ENCODE measurements at regions of chr1 and their contacts with region 1.

Region 1: DNA sequence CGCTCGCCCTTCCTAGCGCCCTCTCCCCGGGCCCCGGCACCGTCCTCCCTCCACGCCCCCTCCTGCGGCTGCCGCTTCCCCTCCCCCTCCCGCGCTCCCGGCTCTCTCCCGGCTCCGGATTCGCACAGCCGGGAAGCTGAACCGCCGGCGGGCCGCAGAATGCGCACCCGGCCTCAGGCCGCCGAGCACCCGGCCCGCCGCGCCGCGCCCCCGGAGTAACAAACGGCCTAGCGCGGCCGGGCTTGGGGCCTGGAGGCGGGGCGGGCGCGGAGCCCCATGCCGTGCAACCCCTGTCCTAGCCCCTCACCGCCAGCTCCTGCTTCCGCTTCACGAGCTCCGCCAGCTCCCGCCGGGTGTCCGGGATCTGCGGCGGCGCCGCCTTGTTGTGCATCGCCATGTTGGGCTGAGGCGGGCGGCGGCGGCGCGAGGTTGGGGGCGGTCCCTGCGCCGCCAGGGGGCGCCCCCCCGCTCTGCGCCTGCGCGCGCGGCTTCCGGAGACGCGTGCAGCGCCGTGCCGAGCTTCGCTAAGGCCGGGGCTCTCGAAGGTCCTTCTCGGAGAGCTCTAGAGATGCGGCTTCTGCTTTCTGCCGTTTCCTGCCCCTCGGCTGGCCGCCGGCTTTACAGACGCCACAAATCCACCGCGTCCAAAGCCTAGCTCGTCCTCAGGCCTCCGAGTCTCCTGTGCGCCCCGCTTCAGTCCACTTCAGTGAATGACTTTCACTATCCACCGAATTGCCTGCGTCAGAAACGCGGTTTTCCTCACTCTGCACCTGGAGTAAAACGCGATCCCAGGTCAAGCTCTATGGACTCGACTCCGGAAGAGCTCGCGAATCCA is at the start of gene MEAF6:
- DNase-seq: no peak
- ATAC-seq: peak; percentile 98
- H3K4me3 ChIP-seq: peak within 1 kb of the TSS; percentile 82
- H3K27ac ChIP-seq: peak within 1 kb of the TSS; percentile 39
- H3K4me1 ChIP-seq: peaks cover 6% of the 10 kb centered on the region
- H3K27me3 ChIP-seq: no peaks in the 10 kb centered on the region
- CTCF ChIP-seq: peak; percentile 36 to 74 (median 55); a peak in 5 of 6 replicates
- EP300 ChIP-seq: no peak
- POLR2A ChIP-seq: peak; percentile 84
- RAD21 ChIP-seq: no peak
- polyA plus RNA-seq, gene MEAF6: 30.8 to 33.3 TPM

Region 2: GRCh38 chr1:37479255-37480124 is 35.1 kb before region 1 on chr1:
- CTCF ChIA-PET with region 1: interaction called, 7 read pairs
- POLR2A ChIA-PET with region 1: interaction called, 28 read pairs
- RAD21 ChIA-PET with region 1: interaction called, 13 read pairs
- SMC1A ChIA-PET with region 1: interaction called, 6 read pairs
- in situ Hi-C with region 1: no loop called
- intact Hi-C with region 1: loop called (anchors 2 kb)
- DNase-seq: peak; percentile 65
- ATAC-seq: peak; percentile 53
- H3K4me3 ChIP-seq: peak overlapping the region; percentile 99
- H3K27ac ChIP-seq: peak overlapping the region; percentile 99
- H3K4me1 ChIP-seq: peaks cover 22% of the 10 kb centered on the region
- H3K27me3 ChIP-seq: no peaks in the 10 kb centered on the region
- CTCF ChIP-seq: no peak
- EP300 ChIP-seq: 0 out of 4 replicates have a peak, but pooled peaks of 1 of the 2 experiments have one; percentile 7
- POLR2A ChIP-seq: peak; percentile 85
- RAD21 ChIP-seq: no peak

Region 3: DNA sequence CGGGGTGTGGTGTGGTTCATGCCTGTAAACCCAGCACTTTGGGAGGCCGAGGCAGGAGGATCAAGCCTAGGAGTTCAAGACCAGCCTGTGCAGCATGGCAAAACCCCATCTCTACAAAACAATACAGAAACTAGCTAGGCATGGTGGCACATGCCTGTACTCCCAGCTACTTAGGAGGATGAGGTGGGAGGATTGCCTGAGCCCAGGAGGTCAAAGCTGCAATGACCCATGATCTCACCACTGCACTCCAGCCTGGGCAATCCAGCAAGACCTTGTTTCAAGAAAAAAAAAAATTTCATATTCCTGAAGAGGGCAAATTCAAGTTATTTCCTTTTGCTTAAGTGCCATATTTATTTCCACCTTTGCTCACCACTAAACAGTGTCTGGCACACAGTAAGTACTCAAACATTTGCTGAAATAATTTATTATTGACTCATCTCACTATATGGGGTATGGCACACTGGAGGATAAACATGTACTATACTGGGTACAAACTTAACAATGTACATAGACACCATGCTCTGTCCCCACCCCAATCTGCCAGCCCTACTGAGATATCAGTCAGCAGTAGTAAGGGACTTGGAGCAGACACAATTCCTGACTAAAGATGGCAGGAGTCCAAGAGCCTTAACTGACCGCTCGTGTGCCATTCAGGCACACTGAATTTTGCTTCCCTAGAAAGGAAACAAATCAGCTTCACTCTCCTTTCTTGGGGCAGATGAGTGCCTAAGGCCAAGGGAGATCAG is 15.5 kb before region 1 on chr1:
- CTCF ChIA-PET with region 1: interaction called, 11 read pairs
- POLR2A ChIA-PET with region 1: interaction called, 5 read pairs
- RAD21 ChIA-PET with region 1: interaction called, 3 read pairs
- SMC1A ChIA-PET with region 1: interaction called, 3 read pairs
- in situ Hi-C with region 1: no loop called
- intact Hi-C with region 1: no loop called
- DNase-seq: no peak
- ATAC-seq: no peak
- H3K4me3 ChIP-seq: no peak overlapping the region
- H3K27ac ChIP-seq: no peak overlapping the region
- H3K4me1 ChIP-seq: no peaks in the 10 kb centered on the region
- H3K27me3 ChIP-seq: no peaks in the 10 kb centered on the region
- CTCF ChIP-seq: no peak
- EP300 ChIP-seq: no peak
- POLR2A ChIP-seq: no peak
- RAD21 ChIP-seq: no peak

Region 4: GRCh38 chr1:37553927-37554808 is 39.6 kb after region 1 on chr1 and contains the start of gene SNIP1:
- CTCF ChIA-PET with region 1: interaction called, 8 read pairs
- POLR2A ChIA-PET with region 1: interaction called, 4 read pairs
- RAD21 ChIA-PET with region 1: interaction called, 4 read pairs
- SMC1A ChIA-PET with region 1: no interaction called
- in situ Hi-C with region 1: no loop called
- intact Hi-C with region 1: loop called (anchors 5 kb)
- DNase-seq: peak; percentile 70
- ATAC-seq: peak; percentile 97
- H3K4me3 ChIP-seq: peak within 1 kb of the TSS; percentile 97
- H3K27ac ChIP-seq: peak within 1 kb of the TSS; percentile 58
- H3K4me1 ChIP-seq: peaks cover 6% of the 10 kb centered on the region; the same call in 1 of the 2 replicates
- H3K27me3 ChIP-seq: no peaks in the 10 kb centered on the region
- CTCF ChIP-seq: no peak
- EP300 ChIP-seq: 0 out of 4 replicates have a peak, but pooled peaks of 1 of the 2 experiments have one; percentile 7
- POLR2A ChIP-seq: peak; percentile 89
- RAD21 ChIP-seq: no peak
- polyA plus RNA-seq, gene SNIP1: 2.7 to 3.3 TPM

Measured in GM12878 (cell line).